Mammary epithelial cell (primary cell): ENCODE measurements at regions of chr19 and their contacts with region 1.

Region 1: DNA sequence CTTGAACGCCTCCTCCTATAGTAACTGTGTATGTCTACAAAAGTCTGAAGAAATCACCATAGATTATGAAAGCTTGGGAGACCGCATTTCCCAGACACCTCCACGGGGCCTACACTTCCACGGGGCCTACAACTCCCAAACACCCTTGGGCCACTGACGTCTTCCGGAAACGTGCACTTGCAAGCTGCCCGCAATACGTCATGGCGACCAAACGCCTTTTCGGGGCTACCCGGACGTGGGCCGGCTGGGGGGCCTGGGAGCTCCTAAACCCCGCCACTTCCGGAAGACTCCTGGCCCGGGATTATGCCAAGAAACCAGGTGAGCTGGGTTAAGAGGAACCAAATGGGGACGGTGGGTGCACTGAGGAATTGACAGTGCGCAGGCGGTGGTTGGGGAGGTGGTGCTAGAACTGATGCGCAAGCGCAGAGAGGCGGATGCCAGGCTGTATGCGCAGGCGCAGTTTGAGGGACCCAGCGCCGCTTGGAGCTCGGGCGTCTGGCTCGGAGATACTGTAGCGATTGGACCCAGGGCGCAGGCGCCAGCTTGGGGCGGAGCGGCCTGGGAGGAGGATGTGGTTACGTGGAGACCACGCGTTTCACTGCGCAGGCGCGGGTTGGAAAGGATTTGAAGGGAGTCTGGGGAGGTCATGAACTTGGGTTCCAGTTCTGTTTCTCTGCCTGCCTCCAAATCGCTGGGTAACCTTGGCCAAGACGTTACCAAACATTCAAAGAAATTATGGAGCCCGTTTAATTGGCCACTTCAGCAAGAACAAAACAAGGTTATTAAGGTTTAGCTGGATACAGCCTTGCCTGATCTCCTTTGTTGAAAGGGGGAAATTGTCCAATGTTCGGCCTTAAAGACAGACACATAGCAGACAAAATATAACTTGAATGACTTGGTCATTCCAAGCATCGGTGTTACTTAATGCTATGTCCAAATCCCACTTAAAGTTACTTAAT is at the start of gene MRPL54:
- DNase-seq: peak; percentile 98
- H3K4me3 ChIP-seq: peak within 1 kb of the TSS; percentile 73 to 100 (median 97)
- H3K27ac ChIP-seq: peak within 1 kb of the TSS; percentile 75
- H3K4me1 ChIP-seq: peaks cover 14% of the 10 kb centered on the region
- H3K27me3 ChIP-seq: no peaks in the 10 kb centered on the region
- CTCF ChIP-seq: no peak
- total RNA-seq, gene MRPL54: 23.7 to 48.2 TPM

Region 2: DNA sequence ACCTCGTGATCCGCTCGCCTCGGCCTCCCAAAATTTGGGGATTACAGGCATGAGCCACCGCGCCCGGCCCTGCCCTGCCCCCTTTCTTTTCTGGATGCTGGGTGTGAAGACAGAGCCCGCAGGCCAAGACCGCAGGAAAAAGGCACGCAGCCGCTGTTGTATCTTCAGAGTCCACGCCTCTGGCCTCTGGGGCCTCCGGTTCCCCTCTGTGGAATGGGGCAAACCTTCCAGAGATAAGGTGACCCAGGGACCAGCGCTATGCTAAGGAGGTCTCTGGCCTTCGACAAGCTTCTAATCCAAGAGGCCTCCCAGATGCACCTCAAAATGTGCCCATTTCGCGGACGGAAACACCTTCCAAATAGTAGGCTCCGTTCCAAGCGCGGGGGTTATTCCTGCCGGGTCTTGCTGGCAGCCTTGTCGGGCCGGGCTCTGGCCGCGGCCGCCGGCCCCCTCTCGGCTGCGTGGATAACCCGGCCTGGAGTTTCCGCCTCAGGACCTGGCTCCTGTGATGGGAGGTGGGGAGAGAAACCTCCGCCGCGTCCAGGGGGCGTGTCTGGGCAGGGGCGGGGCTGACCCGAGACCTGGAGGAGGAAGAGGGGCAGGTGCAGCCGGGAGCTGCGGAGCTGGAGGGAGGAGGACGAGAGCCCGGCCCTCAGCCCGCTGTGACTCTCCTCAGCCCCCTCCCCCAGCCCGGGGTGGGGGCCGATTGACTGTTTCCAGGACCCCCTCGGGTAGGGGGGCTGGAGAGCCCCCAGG is 41.5 kb before region 1 on chr19:
- CTCF ChIA-PET with region 1: no interaction called
- dilution Hi-C with region 1: no loop called
- in situ Hi-C with region 1: no loop called
- intact Hi-C with region 1: loop called (anchors 2 kb)
- DNase-seq: peak; percentile 83
- H3K4me3 ChIP-seq: no peak overlapping the region
- H3K27ac ChIP-seq: no peak overlapping the region
- H3K4me1 ChIP-seq: peaks cover 5% of the 10 kb centered on the region
- H3K27me3 ChIP-seq: no peaks in the 10 kb centered on the region
- CTCF ChIP-seq: no peak

Region 3: GRCh38 chr19:3970808-3971598 is 208.2 kb after region 1 on chr19 and contains the start of gene DAPK3:
- CTCF ChIA-PET with region 1: no interaction called
- dilution Hi-C with region 1: no loop called
- in situ Hi-C with region 1: no loop called
- intact Hi-C with region 1: loop called (anchors 2 kb)
- DNase-seq: peak; percentile 99
- H3K4me3 ChIP-seq: peak within 1 kb of the TSS; percentile 92 to 97 (median 96)
- H3K27ac ChIP-seq: peak within 1 kb of the TSS; percentile 88
- H3K4me1 ChIP-seq: peaks cover 24% of the 10 kb centered on the region
- H3K27me3 ChIP-seq: no peaks in the 10 kb centered on the region
- CTCF ChIP-seq: no peak
- total RNA-seq, gene DAPK3: 69.2 to 99.9 TPM

Region 4: GRCh38 chr19:4139614-4140236 is 376.9 kb after region 1 on chr19:
- CTCF ChIA-PET with region 1: interaction called, 14 read pairs
- dilution Hi-C with region 1: no loop called
- in situ Hi-C with region 1: no loop called
- intact Hi-C with region 1: no loop called
- DNase-seq: peak; percentile 54
- H3K4me3 ChIP-seq: no peak overlapping the region
- H3K27ac ChIP-seq: no peak overlapping the region
- H3K4me1 ChIP-seq: no peaks in the 10 kb centered on the region
- H3K27me3 ChIP-seq: no peaks in the 10 kb centered on the region
- CTCF ChIP-seq: peak; percentile 86 to 89

Region 5: DNA sequence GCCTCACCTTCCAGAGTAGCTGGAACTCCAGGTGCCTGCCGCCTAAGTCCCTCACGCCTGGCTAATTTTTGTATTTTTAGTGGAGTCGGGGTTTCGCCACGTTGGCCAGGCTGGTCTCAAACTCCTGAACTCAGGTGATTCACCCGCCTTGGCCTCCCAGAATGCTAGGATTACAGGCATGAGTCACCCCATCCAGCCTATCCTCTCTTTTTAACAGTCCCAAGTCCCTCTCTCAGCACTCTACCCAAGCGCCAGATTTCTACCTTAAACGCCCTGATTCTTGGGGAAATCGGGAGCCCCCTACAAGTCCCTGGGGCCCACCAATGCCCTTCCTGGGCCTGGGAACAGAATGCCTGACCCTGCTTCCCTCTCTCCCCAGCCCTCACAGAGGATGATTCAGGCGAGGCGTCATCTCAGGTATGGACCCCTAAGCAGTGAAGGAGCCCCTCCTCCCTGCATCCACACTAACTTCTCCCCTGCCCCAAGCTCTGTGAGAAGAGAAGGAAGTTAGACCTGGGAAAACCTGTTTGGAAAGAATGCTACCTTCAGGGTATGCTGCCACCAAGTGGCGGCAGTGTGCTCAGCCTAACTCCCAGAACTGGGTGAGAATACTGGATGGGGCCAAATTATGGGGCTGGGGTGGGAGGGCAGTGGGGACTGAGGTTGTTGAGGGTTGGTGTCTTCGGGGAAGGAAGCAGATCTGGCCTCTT is 445.8 kb after region 1 on chr19:
- CTCF ChIA-PET with region 1: no interaction called
- dilution Hi-C with region 1: no loop called
- in situ Hi-C with region 1: no loop called
- intact Hi-C with region 1: loop called (anchors 2 kb)
- DNase-seq: peak; percentile 45
- H3K4me3 ChIP-seq: no peak overlapping the region
- H3K27ac ChIP-seq: no peak overlapping the region
- H3K4me1 ChIP-seq: no peaks in the 10 kb centered on the region
- H3K27me3 ChIP-seq: no peaks in the 10 kb centered on the region
- CTCF ChIP-seq: peak; percentile 20 to 37